Heart left ventricle (tissue), 16 donors: ENCODE measurements at regions of chr9 and their contacts with region 1.

Region 1: GRCh38 chr9:78035383-78035993 is 3.9 kb upstream of the GNAQ start:
- DNase-seq: peak in 4 of 5 donors; percentile 31 to 66 (median 50)
- ATAC-seq: peak in 3 of 4 donors; percentile 8 to 37 (median 32)
- H3K4me3 ChIP-seq: peak overlapping the region in 1 of 12 donors; percentile 15
- H3K27ac ChIP-seq: peak overlapping the region in 7 of 12 donors; percentile 6 to 44 (median 31)
- H3K4me1 ChIP-seq: peaks cover 0 to 33% (median 8%) of the 10 kb centered on the region in 12 donors
- H3K27me3 ChIP-seq: peaks cover 0 to 8% (median 0%) of the 10 kb centered on the region in 9 donors
- CTCF ChIP-seq: peak; percentile 67 to 93 (median 80)
- POLR2A ChIP-seq: no peak

Region 2: GRCh38 chr9:77433675-77434445 is 601.6 kb before region 1 on chr9:
- intact Hi-C with region 1: loop called in 7 of 10 experiments (anchors 5 to 10 kb)
- DNase-seq: peak; percentile 45 to 74 (median 52)
- ATAC-seq: peak; percentile 68 to 89 (median 82)
- H3K4me3 ChIP-seq: no peak overlapping the region
- H3K27ac ChIP-seq: no peak overlapping the region
- H3K4me1 ChIP-seq: peaks cover 0 to 5% (median 0%) of the 10 kb centered on the region in 12 donors
- H3K27me3 ChIP-seq: no peaks in the 10 kb centered on the region
- CTCF ChIP-seq: peak; percentile 84 to 98 (median 92)
- POLR2A ChIP-seq: no peak

Region 3: GRCh38 chr9:77456829-77457437 is 578.6 kb before region 1 on chr9:
- intact Hi-C with region 1: loop called in 4 of 10 experiments (anchors 5 to 10 kb)
- DNase-seq: peak; percentile 64 to 85 (median 80)
- ATAC-seq: peak; percentile 32 to 88 (median 82)
- H3K4me3 ChIP-seq: no peak overlapping the region
- H3K27ac ChIP-seq: no peak overlapping the region
- H3K4me1 ChIP-seq: peaks cover 0 to 17% (median 1%) of the 10 kb centered on the region in 12 donors
- H3K27me3 ChIP-seq: no peaks in the 10 kb centered on the region
- CTCF ChIP-seq: peak; percentile 78 to 95 (median 84)
- POLR2A ChIP-seq: no peak

Region 4: DNA sequence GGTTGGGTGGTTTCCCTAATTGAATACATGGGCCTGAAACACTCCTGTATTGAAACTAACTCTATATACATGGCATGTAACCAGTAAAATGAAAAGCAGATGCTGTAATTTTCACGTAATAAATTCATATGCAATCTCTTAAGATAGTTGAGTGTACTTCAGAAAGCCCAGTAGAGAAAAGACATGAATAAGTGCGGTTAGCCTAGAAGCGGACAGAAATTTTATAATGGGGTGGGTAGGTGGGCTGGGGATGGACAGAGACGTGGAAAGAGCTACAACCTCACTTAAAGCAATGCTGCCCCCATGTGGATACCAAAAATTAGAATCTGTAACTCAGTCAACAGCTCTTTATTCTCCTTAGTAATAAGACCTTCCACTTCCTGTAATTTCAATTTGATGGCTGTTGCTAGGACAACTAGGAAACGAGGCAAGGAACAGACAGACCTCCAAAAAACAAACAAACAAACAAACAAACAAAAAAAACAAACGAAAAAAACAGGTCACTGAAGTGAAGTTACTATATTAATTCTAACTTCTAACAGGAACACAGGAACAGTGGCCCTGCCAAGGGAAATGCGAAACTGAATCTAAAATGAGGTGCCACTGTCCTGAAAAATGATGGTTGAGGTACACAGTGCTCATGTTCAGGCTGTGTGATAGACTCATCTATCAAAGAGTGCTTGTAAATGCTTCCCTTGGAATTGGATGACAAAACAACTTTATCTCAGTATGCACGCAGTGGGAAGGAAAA is 284.0 kb before region 1 on chr9:
- intact Hi-C with region 1: loop called in 4 of 10 experiments (anchors 5 to 10 kb)
- DNase-seq: peak in 2 of 5 donors; percentile 30 to 36
- ATAC-seq: peak in 3 of 4 donors; percentile 60 to 80 (median 76)
- H3K4me3 ChIP-seq: no peak overlapping the region
- H3K27ac ChIP-seq: peak overlapping the region in 2 of 12 donors; percentile 24 to 61
- H3K4me1 ChIP-seq: peaks cover 0 to 14% (median 6%) of the 10 kb centered on the region in 12 donors
- H3K27me3 ChIP-seq: no peaks in the 10 kb centered on the region
- CTCF ChIP-seq: peak; percentile 35 to 67 (median 52)
- POLR2A ChIP-seq: no peak

Region 5: GRCh38 chr9:77770340-77770739 is 265.1 kb before region 1 on chr9:
- intact Hi-C with region 1: loop called in 2 of 10 experiments (anchors 5 to 10 kb)
- DNase-seq: no peak
- ATAC-seq: no peak
- H3K4me3 ChIP-seq: no peak overlapping the region
- H3K27ac ChIP-seq: peak overlapping the region in 5 of 12 donors; percentile 21 to 51 (median 39)
- H3K4me1 ChIP-seq: peaks cover 0 to 33% (median 10%) of the 10 kb centered on the region in 12 donors
- H3K27me3 ChIP-seq: no peaks in the 10 kb centered on the region
- CTCF ChIP-seq: no peak
- POLR2A ChIP-seq: no peak

Region 6: DNA sequence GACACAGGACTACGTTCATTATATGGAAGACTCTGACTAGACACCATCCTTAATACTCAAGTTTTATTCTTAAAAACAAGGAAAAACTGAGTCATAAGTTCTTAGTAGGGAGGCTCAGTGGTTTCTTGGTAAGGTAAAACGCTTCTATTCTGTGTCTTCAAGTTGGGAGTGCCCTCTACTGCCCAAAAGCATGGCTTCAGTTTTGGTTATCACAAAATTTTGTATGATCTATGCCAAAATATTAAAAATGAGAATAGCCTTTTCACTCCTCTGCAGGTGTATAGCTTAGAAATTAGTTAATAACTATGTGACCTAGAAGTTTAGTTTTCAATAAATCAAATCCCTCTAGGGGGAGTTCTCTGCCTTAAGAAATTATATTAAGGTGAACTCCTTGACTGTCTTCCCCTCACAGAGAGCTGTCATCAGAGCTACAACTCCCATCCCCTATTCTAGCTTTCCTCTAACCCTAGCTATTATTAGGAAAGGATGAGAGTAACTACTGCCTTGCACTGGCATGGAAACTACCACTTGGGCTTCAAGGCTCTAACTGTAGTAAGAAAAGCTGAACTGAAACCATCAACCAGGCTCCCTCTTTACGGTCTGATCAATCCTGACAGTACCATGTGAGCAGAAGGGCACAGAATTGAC is 193.6 kb before region 1 on chr9:
- intact Hi-C with region 1: loop called in 8 of 10 experiments (anchors 2 to 10 kb)
- DNase-seq: no peak
- ATAC-seq: peak in 1 of 4 donors; percentile 13
- H3K4me3 ChIP-seq: no peak overlapping the region
- H3K27ac ChIP-seq: no peak overlapping the region
- H3K4me1 ChIP-seq: peaks cover 0 to 55% (median 17%) of the 10 kb centered on the region in 12 donors
- H3K27me3 ChIP-seq: no peaks in the 10 kb centered on the region
- CTCF ChIP-seq: peak in 9 of 12 donors; percentile 15 to 46 (median 30)
- POLR2A ChIP-seq: no peak

Region 7: GRCh38 chr9:77977210-77977611 is 58.3 kb before region 1 on chr9:
- intact Hi-C with region 1: loop called (anchors 1 to 5 kb)
- DNase-seq: peak; percentile 55 to 71 (median 62)
- ATAC-seq: peak; percentile 67 to 91 (median 86)
- H3K4me3 ChIP-seq: peak overlapping the region in 2 of 12 donors; percentile 3 to 18
- H3K27ac ChIP-seq: peak overlapping the region in 11 of 12 donors; percentile 1 to 81 (median 51)
- H3K4me1 ChIP-seq: peaks cover 0 to 49% (median 25%) of the 10 kb centered on the region in 12 donors
- H3K27me3 ChIP-seq: no peaks in the 10 kb centered on the region
- CTCF ChIP-seq: peak; percentile 13 to 68 (median 58)
- POLR2A ChIP-seq: no peak